ENCODE measurements at regions of chr13 and their contacts with region 1.

Region 1: GRCh38 chr13:49996951-49997895 is at the start of gene TRIM13:
- DNase-seq: peak; percentile 93
- H3K4me3 ChIP-seq: peak within 1 kb of the TSS; percentile 84 to 98 (median 95)
- H3K27ac ChIP-seq: peak within 1 kb of the TSS; percentile 93
- H3K4me1 ChIP-seq: peaks cover 35% of the 10 kb centered on the region
- H3K27me3 ChIP-seq: no peaks in the 10 kb centered on the region
- CTCF ChIP-seq: peak; percentile 80 to 81
- POLR2A ChIP-seq: peak; percentile 84
- total RNA-seq, gene TRIM13: 25.9 and 28.2 TPM in 2 replicates

Region 2: GRCh38 chr13:49936085-49936940 is 60.9 kb before region 1 on chr13 and contains the start of gene SPRYD7:
- CTCF ChIA-PET with region 1: interaction called, 16 read pairs
- POLR2A ChIA-PET with region 1: interaction called, 7 read pairs
- dilution Hi-C with region 1: no loop called
- intact Hi-C with region 1: no loop called
- DNase-seq: peak; percentile 99
- H3K4me3 ChIP-seq: peak within 1 kb of the TSS; percentile 69 to 82 (median 79)
- H3K27ac ChIP-seq: peak within 1 kb of the TSS; percentile 21
- H3K4me1 ChIP-seq: peaks cover 8% of the 10 kb centered on the region
- H3K27me3 ChIP-seq: no peaks in the 10 kb centered on the region
- CTCF ChIP-seq: peak; percentile 90 to 95
- POLR2A ChIP-seq: peak; percentile 70
- total RNA-seq, gene SPRYD7: 7.0 and 7.5 TPM in 2 replicates

Region 3: GRCh38 chr13:50075619-50076097 is 78.4 kb after region 1 on chr13:
- CTCF ChIA-PET with region 1: interaction called, 133 read pairs
- POLR2A ChIA-PET with region 1: interaction called, 7 read pairs
- dilution Hi-C with region 1: no loop called
- intact Hi-C with region 1: no loop called
- DNase-seq: peak; percentile 47
- H3K4me3 ChIP-seq: no peak overlapping the region
- H3K27ac ChIP-seq: no peak overlapping the region
- H3K4me1 ChIP-seq: peaks cover 33% of the 10 kb centered on the region
- H3K27me3 ChIP-seq: no peaks in the 10 kb centered on the region
- CTCF ChIP-seq: no peak
- POLR2A ChIP-seq: no peak

Region 4: DNA sequence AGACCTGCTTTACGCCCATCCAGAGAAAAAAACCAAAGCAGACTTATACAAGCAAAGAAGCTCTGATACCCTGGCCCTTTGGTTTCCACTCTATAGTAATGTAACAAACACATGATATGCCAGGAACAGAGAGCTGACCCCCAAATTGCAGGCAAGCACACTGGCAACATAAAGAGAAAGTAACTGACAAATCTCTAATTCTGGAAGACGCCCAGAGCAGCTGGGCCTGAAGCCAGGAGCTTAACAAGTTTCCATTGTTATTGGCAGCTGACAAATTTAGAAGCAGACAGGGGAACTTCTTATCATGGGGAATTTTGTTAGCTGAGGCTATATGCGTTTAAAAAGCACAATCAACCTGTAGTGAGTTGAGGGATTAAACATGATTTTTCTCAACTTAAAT is 688.3 kb after region 1 on chr13:
- CTCF ChIA-PET with region 1: interaction called, 3 read pairs
- POLR2A ChIA-PET with region 1: no interaction called
- dilution Hi-C with region 1: no loop called
- intact Hi-C with region 1: loop called (anchors 10 kb)
- DNase-seq: peak; percentile 97
- H3K4me3 ChIP-seq: peak overlapping the region in 1 of 3 experiments; percentile 35
- H3K27ac ChIP-seq: peak overlapping the region; percentile 87
- H3K4me1 ChIP-seq: peaks cover 39% of the 10 kb centered on the region
- H3K27me3 ChIP-seq: no peaks in the 10 kb centered on the region
- CTCF ChIP-seq: no peak
- POLR2A ChIP-seq: no peak

Region 5: GRCh38 chr13:50801087-50801931 is 804.1 kb after region 1 on chr13:
- CTCF ChIA-PET with region 1: interaction called, 15 read pairs
- POLR2A ChIA-PET with region 1: no interaction called
- dilution Hi-C with region 1: no loop called
- intact Hi-C with region 1: loop called (anchors 1 kb)
- DNase-seq: peak; percentile 75
- H3K4me3 ChIP-seq: no peak overlapping the region
- H3K27ac ChIP-seq: no peak overlapping the region
- H3K4me1 ChIP-seq: peaks cover 4% of the 10 kb centered on the region
- H3K27me3 ChIP-seq: no peaks in the 10 kb centered on the region
- CTCF ChIP-seq: peak; percentile 71 to 72
- POLR2A ChIP-seq: no peak

Region 6: DNA sequence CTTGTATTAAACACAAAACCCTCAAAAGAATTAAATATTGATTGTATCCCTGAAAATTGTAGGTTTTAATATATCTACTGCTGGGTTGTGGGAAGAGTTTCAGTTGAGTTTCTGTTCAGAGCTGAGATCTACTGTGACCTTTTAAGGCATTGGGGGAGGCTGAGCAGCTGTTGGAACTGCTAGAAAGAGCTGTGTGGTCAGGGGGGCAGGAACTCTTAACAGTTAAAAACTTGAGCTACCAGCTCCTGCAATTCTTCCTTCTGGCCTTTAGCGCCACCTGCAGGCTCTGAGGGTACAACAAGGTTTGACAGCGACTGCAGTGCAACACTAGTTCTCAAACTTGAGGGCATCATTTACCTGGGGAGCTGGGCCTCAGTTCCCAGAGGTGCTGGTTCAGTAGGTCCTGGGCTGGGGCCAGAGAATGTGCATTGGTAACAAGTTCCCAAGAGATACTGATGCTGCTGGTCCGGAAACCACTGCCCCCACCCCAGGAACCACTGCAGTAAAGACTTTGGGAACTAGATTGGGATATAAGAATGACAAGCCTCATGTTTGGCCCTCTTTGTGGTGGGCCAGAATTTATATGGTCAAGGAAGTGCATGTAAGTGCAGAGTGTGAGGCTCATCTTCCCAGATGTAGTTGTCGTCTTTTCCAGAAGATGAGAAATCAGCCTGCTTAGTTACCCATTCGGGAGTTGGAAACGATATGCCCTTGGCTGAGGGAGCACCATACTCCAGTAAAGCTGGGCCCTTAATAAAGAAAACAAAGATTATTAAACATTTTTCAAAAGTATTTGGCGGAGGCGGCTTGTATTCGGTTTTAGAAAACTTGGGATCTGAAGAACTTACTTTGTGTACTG is 914.9 kb after region 1 on chr13:
- CTCF ChIA-PET with region 1: interaction called, 27 read pairs
- POLR2A ChIA-PET with region 1: interaction called, 3 read pairs
- dilution Hi-C with region 1: no loop called
- intact Hi-C with region 1: loop called (anchors 5 kb)
- DNase-seq: peak; percentile 78
- H3K4me3 ChIP-seq: no peak overlapping the region
- H3K27ac ChIP-seq: no peak overlapping the region
- H3K4me1 ChIP-seq: peaks cover 29% of the 10 kb centered on the region
- H3K27me3 ChIP-seq: no peaks in the 10 kb centered on the region
- CTCF ChIP-seq: peak; percentile 83 to 86
- POLR2A ChIP-seq: no peak